Caco-2 (cell line): ENCODE measurements at regions of chr10 and their contacts with region 1.

Region 1: DNA sequence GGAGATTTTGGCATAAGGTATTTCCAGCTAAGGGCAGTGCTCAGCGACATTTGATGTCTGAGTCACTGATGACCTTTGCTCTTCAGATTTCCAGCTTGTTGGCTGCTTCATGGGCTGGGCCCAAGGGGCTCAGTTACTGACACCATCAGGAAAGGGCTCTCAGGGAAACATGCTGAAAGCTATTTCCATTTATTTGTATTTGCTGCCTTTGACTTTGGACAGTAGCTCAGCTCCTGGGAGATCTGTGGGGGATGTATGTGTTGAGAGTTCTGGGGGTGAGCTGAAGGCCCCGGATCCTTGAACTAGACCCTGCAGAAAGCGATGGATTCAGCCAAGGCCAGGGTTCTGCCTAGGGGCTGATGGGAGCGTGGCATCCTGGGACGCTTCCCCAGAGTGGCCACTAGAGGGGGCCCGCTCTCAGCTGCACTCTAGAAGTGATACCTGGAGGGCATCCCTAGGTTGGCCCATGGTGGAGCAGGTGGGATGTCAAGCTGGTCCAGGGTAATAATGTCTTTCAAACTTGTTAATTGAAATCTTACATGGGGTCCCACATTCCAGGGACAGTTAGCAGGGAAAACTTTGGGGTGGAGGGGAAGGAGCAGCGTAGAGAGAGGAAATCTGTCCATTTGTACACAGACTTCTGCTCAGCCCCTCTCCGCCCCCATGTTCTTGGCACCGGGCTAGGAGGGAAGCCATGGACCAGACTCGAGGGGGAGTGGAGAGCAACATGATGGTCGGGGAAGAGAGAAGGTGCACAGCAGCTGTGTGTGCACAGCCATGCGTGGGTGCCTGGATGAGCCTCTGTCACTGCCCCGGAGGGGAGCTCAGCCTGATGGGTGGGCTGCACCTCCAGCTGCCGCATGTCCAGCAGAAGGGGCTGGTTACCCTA is 3.0 kb upstream of the BTBD16 start:
- DNase-seq: peak; percentile 70 to 78
- H3K4me3 ChIP-seq: no peak overlapping the region
- H3K4me3 Mint-ChIP-seq: peak overlapping the region; percentile 8
- H3K27ac Mint-ChIP-seq: peak overlapping the region; percentile 77
- H3K4me1 ChIP-seq: peaks cover 55% of the 10 kb centered on the region
- H3K4me1 Mint-ChIP-seq: peaks cover 51% of the 10 kb centered on the region
- H3K27me3 ChIP-seq: no peaks in the 10 kb centered on the region
- H3K27me3 Mint-ChIP-seq: no peaks in the 10 kb centered on the region
- CTCF ChIP-seq: peak; percentile 84 to 97

Region 2: GRCh38 chr10:122044045-122044661 is 223.9 kb before region 1 on chr10:
- CTCF ChIA-PET with region 1: no interaction called
- POLR2A ChIA-PET with region 1: no interaction called
- intact Hi-C with region 1: no loop called
- DNase-seq: peak; percentile 51 to 55
- H3K4me3 ChIP-seq: no peak overlapping the region
- H3K4me3 Mint-ChIP-seq: peak overlapping the region; percentile 10
- H3K27ac Mint-ChIP-seq: peak overlapping the region; percentile 33
- H3K4me1 ChIP-seq: peaks cover 14% of the 10 kb centered on the region
- H3K4me1 Mint-ChIP-seq: peaks cover 24% of the 10 kb centered on the region
- H3K27me3 ChIP-seq: no peaks in the 10 kb centered on the region
- H3K27me3 Mint-ChIP-seq: no peaks in the 10 kb centered on the region
- CTCF ChIP-seq: no peak

Region 3: DNA sequence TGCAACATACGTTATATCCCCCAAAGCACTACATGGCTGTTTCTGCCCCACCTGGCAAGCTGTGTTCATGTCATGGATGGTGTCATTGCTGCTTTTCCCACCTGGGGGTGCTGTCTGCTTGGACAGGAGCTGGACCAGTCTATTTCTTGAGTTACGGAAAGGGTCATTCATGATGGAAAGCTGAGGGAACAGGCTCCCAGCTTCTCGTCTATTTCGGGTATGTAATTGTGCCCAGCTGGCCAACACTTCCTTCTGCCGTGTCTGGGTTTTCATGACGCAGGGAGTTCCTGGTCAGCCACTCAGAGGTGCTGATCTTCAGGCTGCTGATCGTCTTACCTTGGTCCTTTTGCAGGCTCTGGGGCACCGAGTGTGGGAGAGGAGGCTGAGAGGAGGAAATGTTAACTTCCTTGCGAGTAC is 11.6 kb after region 1 on chr10:
- CTCF ChIA-PET with region 1: interaction called, 23 read pairs
- POLR2A ChIA-PET with region 1: interaction called, 3 read pairs
- intact Hi-C with region 1: no loop called
- DNase-seq: peak; percentile 68 to 69
- H3K4me3 ChIP-seq: no peak overlapping the region
- H3K4me3 Mint-ChIP-seq: no peak overlapping the region
- H3K27ac Mint-ChIP-seq: no peak overlapping the region
- H3K4me1 ChIP-seq: peaks cover 15% of the 10 kb centered on the region
- H3K4me1 Mint-ChIP-seq: no peaks in the 10 kb centered on the region
- H3K27me3 ChIP-seq: no peaks in the 10 kb centered on the region
- H3K27me3 Mint-ChIP-seq: no peaks in the 10 kb centered on the region
- CTCF ChIP-seq: peak; percentile 73 to 78

Region 4: DNA sequence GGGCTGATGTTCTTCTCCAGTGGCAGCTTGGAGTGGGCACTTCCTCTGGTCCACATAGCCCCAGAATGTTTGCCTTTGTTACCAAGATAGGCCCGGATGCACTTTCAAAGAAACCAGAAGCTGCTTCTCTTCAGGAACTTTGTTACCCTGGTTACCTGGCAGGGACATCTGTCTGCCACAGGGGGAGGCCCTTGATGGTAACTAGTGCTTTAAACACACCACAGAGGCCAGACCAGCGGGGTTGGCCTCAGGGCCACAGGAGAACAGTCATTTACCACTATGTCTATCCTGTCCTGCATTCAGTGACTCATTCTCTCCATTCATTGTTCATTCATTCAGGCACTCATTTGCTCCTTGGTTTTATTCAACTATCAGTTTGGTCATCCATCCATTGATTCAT is 94.5 kb after region 1 on chr10:
- CTCF ChIA-PET with region 1: no interaction called
- POLR2A ChIA-PET with region 1: no interaction called
- intact Hi-C with region 1: no loop called
- DNase-seq: no peak
- H3K4me3 ChIP-seq: no peak overlapping the region
- H3K4me3 Mint-ChIP-seq: no peak overlapping the region
- H3K27ac Mint-ChIP-seq: no peak overlapping the region
- H3K4me1 ChIP-seq: peaks cover 8% of the 10 kb centered on the region
- H3K4me1 Mint-ChIP-seq: peaks cover 20% of the 10 kb centered on the region
- H3K27me3 ChIP-seq: no peaks in the 10 kb centered on the region
- H3K27me3 Mint-ChIP-seq: no peaks in the 10 kb centered on the region
- CTCF ChIP-seq: no peak